ENCODE measurements at regions of chr19 and their contacts with region 1.

Region 1: GRCh38 chr19:33430674-33431277 is 57.3 kb downstream of the CEBPG start:
- DNase-seq: peak; percentile 63 to 65
- H3K4me3 ChIP-seq: no peak overlapping the region
- H3K27ac ChIP-seq: no peak overlapping the region
- H3K4me1 ChIP-seq: no peaks in the 10 kb centered on the region
- H3K27me3 ChIP-seq: no peaks in the 10 kb centered on the region
- CTCF ChIP-seq: peak; percentile 90

Region 2: DNA sequence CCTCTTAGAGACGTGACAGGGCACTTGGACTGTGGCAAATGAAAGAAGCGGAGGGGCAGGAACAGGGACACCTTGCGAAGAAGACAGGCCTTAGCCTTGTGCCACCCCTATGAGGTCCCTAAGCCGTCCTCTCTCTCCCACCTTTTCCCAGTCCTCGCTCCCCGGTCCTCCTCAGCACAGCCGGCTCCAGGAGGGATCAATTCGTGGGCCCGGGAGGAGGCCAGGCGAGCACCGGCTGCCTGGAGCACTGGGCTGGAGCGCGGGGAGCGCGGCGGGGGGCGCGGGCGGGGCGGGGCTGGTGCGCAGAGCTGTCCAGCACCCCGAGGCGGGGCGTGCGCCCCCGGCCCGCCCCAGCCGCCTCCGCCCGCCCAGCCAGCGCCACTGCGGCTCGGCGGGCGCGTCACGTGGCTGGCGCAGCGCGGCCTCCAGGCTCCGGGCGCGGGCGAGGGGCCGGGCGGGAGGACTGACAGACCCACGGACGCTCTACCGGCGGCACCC is 236.9 kb before region 1 on chr19 and contains the start of gene LRP3:
- CTCF ChIA-PET with region 1: no interaction called
- POLR2A ChIA-PET with region 1: no interaction called
- intact Hi-C with region 1: no loop called
- DNase-seq: no peak
- H3K4me3 ChIP-seq: peak within 1 kb of the TSS; percentile 51; the same call in 1 of the 2 replicates
- H3K27ac ChIP-seq: no peak within 1 kb of the TSS
- H3K4me1 ChIP-seq: no peaks in the 10 kb centered on the region
- H3K27me3 ChIP-seq: peaks cover 24% of the 10 kb centered on the region
- CTCF ChIP-seq: no peak
- total RNA-seq, gene LRP3: 2.3 and 3.0 TPM in 2 replicates

Region 3: GRCh38 chr19:33521480-33522370 is 90.9 kb after region 1 on chr19 and contains the start of gene PEPD:
- CTCF ChIA-PET with region 1: interaction called, 4 read pairs
- POLR2A ChIA-PET with region 1: no interaction called
- intact Hi-C with region 1: loop called (anchors 10 kb)
- DNase-seq: peak; percentile 60 to 84
- H3K4me3 ChIP-seq: peak within 1 kb of the TSS; percentile 98
- H3K27ac ChIP-seq: no peak within 1 kb of the TSS
- H3K4me1 ChIP-seq: peaks cover 12% of the 10 kb centered on the region
- H3K27me3 ChIP-seq: peaks cover 18% of the 10 kb centered on the region; the same call in 1 of the 2 replicates
- CTCF ChIP-seq: no peak
- total RNA-seq, gene PEPD: 64.9 and 71.0 TPM in 2 replicates

Region 4: GRCh38 chr19:33545217-33545981 is 114.6 kb after region 1 on chr19:
- CTCF ChIA-PET with region 1: interaction called, 12 read pairs
- POLR2A ChIA-PET with region 1: no interaction called
- intact Hi-C with region 1: no loop called
- DNase-seq: no peak
- H3K4me3 ChIP-seq: no peak overlapping the region
- H3K27ac ChIP-seq: no peak overlapping the region
- H3K4me1 ChIP-seq: no peaks in the 10 kb centered on the region
- H3K27me3 ChIP-seq: peaks cover 57% of the 10 kb centered on the region
- CTCF ChIP-seq: no peak

Region 5: GRCh38 chr19:33690378-33691029 is 259.7 kb after region 1 on chr19:
- CTCF ChIA-PET with region 1: interaction called, 10 read pairs
- POLR2A ChIA-PET with region 1: no interaction called
- intact Hi-C with region 1: no loop called
- DNase-seq: no peak
- H3K4me3 ChIP-seq: no peak overlapping the region
- H3K27ac ChIP-seq: no peak overlapping the region
- H3K4me1 ChIP-seq: no peaks in the 10 kb centered on the region
- H3K27me3 ChIP-seq: peaks cover 92% of the 10 kb centered on the region
- CTCF ChIP-seq: no peak

Region 6: GRCh38 chr19:34145741-34146202 is 715.0 kb after region 1 on chr19:
- CTCF ChIA-PET with region 1: no interaction called
- POLR2A ChIA-PET with region 1: no interaction called
- intact Hi-C with region 1: loop called (anchors 5 kb)
- DNase-seq: peak; percentile 44 to 49
- H3K4me3 ChIP-seq: no peak overlapping the region
- H3K27ac ChIP-seq: no peak overlapping the region
- H3K4me1 ChIP-seq: no peaks in the 10 kb centered on the region
- H3K27me3 ChIP-seq: no peaks in the 10 kb centered on the region
- CTCF ChIP-seq: peak; percentile 84

Measured in PC-9 (cell line).